Activated CD4-positive, alpha-beta T cell treated with anti-CD3 and anti-CD28 coated beads for 36 hours (primary cell): ENCODE measurements at regions of chr4 and their contacts with region 1.

Region 1: DNA sequence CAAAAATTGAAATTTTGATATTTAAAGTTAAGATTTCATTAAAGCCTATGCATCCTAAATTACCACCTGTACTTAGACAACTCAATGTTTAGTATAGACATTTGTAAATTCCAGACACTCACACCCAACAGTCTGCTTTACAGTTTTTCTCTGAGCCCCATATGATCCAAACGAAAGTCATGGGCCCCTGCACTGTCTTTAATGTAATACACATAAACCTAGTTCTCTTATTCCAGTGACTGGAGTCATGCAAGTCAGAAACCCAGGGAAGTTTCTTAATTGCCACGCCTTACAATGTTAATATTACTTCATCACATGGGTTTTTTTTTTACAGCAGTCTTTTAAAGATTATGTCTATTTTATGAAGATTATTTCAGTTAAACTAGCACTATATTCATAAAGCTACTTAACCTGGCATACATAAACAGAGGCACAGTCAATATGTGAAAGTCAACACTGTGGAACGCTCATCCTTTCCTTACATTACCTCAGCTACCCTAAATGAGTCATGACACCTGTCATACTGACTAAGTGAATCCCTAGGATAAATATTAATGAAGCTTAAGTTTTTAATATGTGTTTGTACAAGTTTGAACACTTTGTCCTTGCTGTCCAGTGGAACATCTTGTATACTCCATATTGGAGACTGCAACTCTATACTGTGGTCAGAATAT is 67.7 kb upstream of the H2AZ1 start:
- DNase-seq: peak; percentile 11
- ATAC-seq: peak; percentile 96
- H3K4me3 Mint-ChIP-seq: no peak overlapping the region
- H3K27ac Mint-ChIP-seq: no peak overlapping the region
- H3K4me1 Mint-ChIP-seq: peaks cover 11% of the 10 kb centered on the region
- H3K27me3 Mint-ChIP-seq: peaks cover 11% of the 10 kb centered on the region

Region 2: DNA sequence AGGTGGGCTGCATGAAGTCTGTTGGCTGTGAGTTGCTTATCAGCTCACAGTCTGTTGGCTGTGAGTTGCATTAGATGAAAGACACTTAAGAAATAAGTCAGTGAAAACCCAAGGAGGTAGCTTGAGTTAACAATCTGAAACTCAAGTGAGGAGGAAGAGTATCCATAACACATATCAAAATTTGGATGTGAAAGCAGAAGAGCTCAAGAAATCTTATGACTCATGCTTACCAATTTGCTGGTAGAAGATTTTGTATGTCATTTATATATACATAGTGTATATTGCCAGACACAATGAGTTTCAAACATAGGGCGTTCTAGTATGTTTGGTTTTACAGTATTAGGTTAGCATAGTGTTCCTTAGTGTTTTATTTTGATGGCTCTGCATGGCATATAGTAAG is 65.1 kb after region 1 on chr4:
- CTCF ChIA-PET with region 1: no interaction called
- POLR2A ChIA-PET with region 1: interaction called, 4 read pairs
- intact Hi-C with region 1: loop called in 1 of 2 experiments (anchors 2 kb)
- DNase-seq: no peak
- ATAC-seq: peak; percentile 73
- H3K4me3 Mint-ChIP-seq: no peak overlapping the region
- H3K27ac Mint-ChIP-seq: peak overlapping the region; percentile 81
- H3K4me1 Mint-ChIP-seq: peaks cover 52% of the 10 kb centered on the region
- H3K27me3 Mint-ChIP-seq: peaks cover 3% of the 10 kb centered on the region

Region 3: GRCh38 chr4:100823066-100823992 is 805.6 kb after region 1 on chr4:
- CTCF ChIA-PET with region 1: no interaction called
- POLR2A ChIA-PET with region 1: no interaction called
- intact Hi-C with region 1: loop called in 1 of 2 experiments (anchors 2 kb)
- DNase-seq: peak; percentile 49
- ATAC-seq: peak; percentile 83
- H3K4me3 Mint-ChIP-seq: no peak overlapping the region
- H3K27ac Mint-ChIP-seq: peak overlapping the region; percentile 22
- H3K4me1 Mint-ChIP-seq: peaks cover 13% of the 10 kb centered on the region
- H3K27me3 Mint-ChIP-seq: peaks cover 2% of the 10 kb centered on the region